ENCODE measurements at regions of chr5 and their contacts with region 1.

Region 1: GRCh38 chr5:36690041-36690961 is 83.9 kb downstream of the SLC1A3 start:
- DNase-seq: peak; percentile 62 to 92 (median 78)
- ATAC-seq: peak; percentile 86 to 94 (median 88)
- H3K4me3 ChIP-seq: peak overlapping the region; percentile 2 to 50 (median 26)
- H3K27ac ChIP-seq: peak overlapping the region in 3 of 4 donors; percentile 33 to 75 (median 72)
- H3K4me1 ChIP-seq: no peaks in the 10 kb centered on the region
- H3K27me3 ChIP-seq: no peaks in the 10 kb centered on the region
- CTCF ChIP-seq: peak; percentile 67 to 82 (median 78)

Region 2: GRCh38 chr5:36507332-36507952 is 182.9 kb before region 1 on chr5:
- intact Hi-C with region 1: loop called in 1 of 3 experiments (anchors 10 kb)
- DNase-seq: peak; percentile 43 to 91 (median 72)
- ATAC-seq: peak; percentile 46 to 87 (median 80)
- H3K4me3 ChIP-seq: no peak overlapping the region
- H3K27ac ChIP-seq: no peak overlapping the region
- H3K4me1 ChIP-seq: peaks cover 0 to 4% (median 4%) of the 10 kb centered on the region in 3 donors
- H3K27me3 ChIP-seq: no peaks in the 10 kb centered on the region
- CTCF ChIP-seq: peak; percentile 37 to 84 (median 76)

Region 3: DNA sequence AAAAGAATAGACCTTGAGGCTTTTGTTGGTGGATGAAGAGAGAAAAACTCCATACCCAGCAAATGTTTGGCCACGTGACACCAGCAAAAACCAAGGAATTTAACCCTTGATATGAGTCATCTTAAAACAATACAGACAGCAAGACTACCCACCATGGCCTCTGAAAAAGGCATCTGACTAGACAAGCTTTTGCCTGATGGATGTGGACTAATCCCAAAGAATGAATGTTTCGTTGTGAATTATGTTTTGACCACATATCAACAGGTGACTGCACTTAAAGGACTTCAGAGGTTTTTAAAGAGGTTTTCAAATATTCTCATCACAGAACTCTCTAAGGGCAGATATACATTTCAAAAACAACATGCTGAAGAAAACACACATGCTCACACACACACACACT is 116.9 kb before region 1 on chr5:
- intact Hi-C with region 1: no loop called
- DNase-seq: no peak
- ATAC-seq: no peak
- H3K4me3 ChIP-seq: no peak overlapping the region
- H3K27ac ChIP-seq: no peak overlapping the region
- H3K4me1 ChIP-seq: no peaks in the 10 kb centered on the region
- H3K27me3 ChIP-seq: peaks cover 0 to 4% (median 0%) of the 10 kb centered on the region in 4 donors
- CTCF ChIP-seq: no peak

Region 4: GRCh38 chr5:36606428-36607113 is 83.7 kb before region 1 on chr5 and contains the start of gene SLC1A3:
- intact Hi-C with region 1: no loop called
- DNase-seq: peak in 5 of 6 donors; percentile 29 to 65 (median 53)
- ATAC-seq: peak; percentile 82 to 94 (median 92)
- H3K4me3 ChIP-seq: peak within 1 kb of the TSS; percentile 13 to 58 (median 21)
- H3K27ac ChIP-seq: peak within 1 kb of the TSS in 2 of 4 donors; percentile 59 to 66
- H3K4me1 ChIP-seq: peaks cover 0 to 5% (median 5%) of the 10 kb centered on the region in 3 donors
- H3K27me3 ChIP-seq: no peaks in the 10 kb centered on the region
- CTCF ChIP-seq: no peak
- total RNA-seq, gene SLC1A3: 0.87 to 21.0 (median 3.5) TPM